CD8-positive, alpha-beta T cell (primary cell): ENCODE measurements at regions of chr14 and their contacts with region 1.

Region 1: GRCh38 chr14:92783816-92784431 is 10.2 kb upstream of the GOLGA5 start:
- DNase-seq: peak in 4 of 9 experiments; percentile 21 to 67 (median 42)
- ATAC-seq: peak; percentile 88
- H3K4me3 ChIP-seq: no peak overlapping the region
- H3K4me3 Mint-ChIP-seq: no peak overlapping the region
- H3K27ac ChIP-seq: no peak overlapping the region
- H3K27ac Mint-ChIP-seq: no peak overlapping the region
- H3K4me1 ChIP-seq: no peaks in the 10 kb centered on the region
- H3K4me1 Mint-ChIP-seq: no peaks in the 10 kb centered on the region
- H3K27me3 ChIP-seq: no peaks in the 10 kb centered on the region
- H3K27me3 Mint-ChIP-seq: no peaks in the 10 kb centered on the region
- CTCF ChIP-seq: peak; percentile 60

Region 2: GRCh38 chr14:92637228-92637627 is 146.7 kb before region 1 on chr14:
- CTCF ChIA-PET with region 1: no interaction called
- POLR2A ChIA-PET with region 1: no interaction called
- intact Hi-C with region 1: no loop called
- DNase-seq: no peak
- ATAC-seq: no peak
- H3K4me3 ChIP-seq: no peak overlapping the region
- H3K4me3 Mint-ChIP-seq: no peak overlapping the region
- H3K27ac ChIP-seq: no peak overlapping the region
- H3K27ac Mint-ChIP-seq: no peak overlapping the region
- H3K4me1 ChIP-seq: no peaks in the 10 kb centered on the region
- H3K4me1 Mint-ChIP-seq: peaks cover 22% of the 10 kb centered on the region
- H3K27me3 ChIP-seq: no peaks in the 10 kb centered on the region
- H3K27me3 Mint-ChIP-seq: no peaks in the 10 kb centered on the region
- CTCF ChIP-seq: no peak

Region 3: GRCh38 chr14:92686900-92687444 is 97.0 kb before region 1 on chr14:
- CTCF ChIA-PET with region 1: interaction called, 4 read pairs
- POLR2A ChIA-PET with region 1: no interaction called
- intact Hi-C with region 1: loop called in 1 of 2 experiments (anchors 1 kb)
- DNase-seq: peak; percentile 16 to 87 (median 49)
- ATAC-seq: peak; percentile 89
- H3K4me3 ChIP-seq: no peak overlapping the region
- H3K4me3 Mint-ChIP-seq: no peak overlapping the region
- H3K27ac ChIP-seq: no peak overlapping the region
- H3K27ac Mint-ChIP-seq: peak overlapping the region; percentile 57
- H3K4me1 ChIP-seq: peaks cover 2% of the 10 kb centered on the region
- H3K4me1 Mint-ChIP-seq: peaks cover 6% of the 10 kb centered on the region
- H3K27me3 ChIP-seq: no peaks in the 10 kb centered on the region
- H3K27me3 Mint-ChIP-seq: no peaks in the 10 kb centered on the region
- CTCF ChIP-seq: peak; percentile 92

Region 4: GRCh38 chr14:92712654-92713051 is 71.3 kb before region 1 on chr14:
- CTCF ChIA-PET with region 1: interaction called, 104 read pairs
- POLR2A ChIA-PET with region 1: interaction called, 3 read pairs
- intact Hi-C with region 1: loop called (anchors 1 kb)
- DNase-seq: no peak
- ATAC-seq: no peak
- H3K4me3 ChIP-seq: no peak overlapping the region
- H3K4me3 Mint-ChIP-seq: no peak overlapping the region
- H3K27ac ChIP-seq: no peak overlapping the region
- H3K27ac Mint-ChIP-seq: no peak overlapping the region
- H3K4me1 ChIP-seq: no peaks in the 10 kb centered on the region
- H3K4me1 Mint-ChIP-seq: no peaks in the 10 kb centered on the region
- H3K27me3 ChIP-seq: peaks cover 0 to 2% of the 10 kb centered on the region in 2 experiments
- H3K27me3 Mint-ChIP-seq: no peaks in the 10 kb centered on the region
- CTCF ChIP-seq: no peak

Region 5: GRCh38 chr14:92719890-92720323 is 64.0 kb before region 1 on chr14:
- CTCF ChIA-PET with region 1: interaction called, 104 read pairs
- POLR2A ChIA-PET with region 1: no interaction called
- intact Hi-C with region 1: no loop called
- DNase-seq: no peak
- ATAC-seq: no peak
- H3K4me3 ChIP-seq: no peak overlapping the region
- H3K4me3 Mint-ChIP-seq: no peak overlapping the region
- H3K27ac ChIP-seq: no peak overlapping the region
- H3K27ac Mint-ChIP-seq: no peak overlapping the region
- H3K4me1 ChIP-seq: no peaks in the 10 kb centered on the region
- H3K4me1 Mint-ChIP-seq: no peaks in the 10 kb centered on the region
- H3K27me3 ChIP-seq: no peaks in the 10 kb centered on the region
- H3K27me3 Mint-ChIP-seq: no peaks in the 10 kb centered on the region
- CTCF ChIP-seq: no peak